Psoas muscle (tissue), 8 donors: ENCODE measurements at regions of chr9 and their contacts with region 1.

Region 1: GRCh38 chr9:35664531-35665470 is at the start of gene ARHGEF39:
- DNase-seq: peak; percentile 85 to 89
- ATAC-seq: peak; percentile 82 to 88 (median 86)
- H3K4me3 ChIP-seq: peak within 1 kb of the TSS; percentile 67
- H3K27ac ChIP-seq: peak within 1 kb of the TSS; percentile 61
- H3K4me1 ChIP-seq: peaks cover 24% of the 10 kb centered on the region
- H3K27me3 ChIP-seq: no peaks in the 10 kb centered on the region
- CTCF ChIP-seq: no peak
- total RNA-seq, gene ARHGEF39: 0.07 to 0.21 (median 0.10) TPM in 3 of 4 donors, not detected in the other

Region 2: GRCh38 chr9:35685506-35685905 is 20.7 kb after region 1 on chr9:
- intact Hi-C with region 1: loop called in 1 of 2 experiments (anchors 2 kb)
- DNase-seq: no peak
- ATAC-seq: no peak
- H3K4me3 ChIP-seq: peak overlapping the region; percentile 100
- H3K27ac ChIP-seq: peak overlapping the region; percentile 100
- H3K4me1 ChIP-seq: peaks cover 27% of the 10 kb centered on the region
- H3K27me3 ChIP-seq: no peaks in the 10 kb centered on the region
- CTCF ChIP-seq: no peak

Region 3: DNA sequence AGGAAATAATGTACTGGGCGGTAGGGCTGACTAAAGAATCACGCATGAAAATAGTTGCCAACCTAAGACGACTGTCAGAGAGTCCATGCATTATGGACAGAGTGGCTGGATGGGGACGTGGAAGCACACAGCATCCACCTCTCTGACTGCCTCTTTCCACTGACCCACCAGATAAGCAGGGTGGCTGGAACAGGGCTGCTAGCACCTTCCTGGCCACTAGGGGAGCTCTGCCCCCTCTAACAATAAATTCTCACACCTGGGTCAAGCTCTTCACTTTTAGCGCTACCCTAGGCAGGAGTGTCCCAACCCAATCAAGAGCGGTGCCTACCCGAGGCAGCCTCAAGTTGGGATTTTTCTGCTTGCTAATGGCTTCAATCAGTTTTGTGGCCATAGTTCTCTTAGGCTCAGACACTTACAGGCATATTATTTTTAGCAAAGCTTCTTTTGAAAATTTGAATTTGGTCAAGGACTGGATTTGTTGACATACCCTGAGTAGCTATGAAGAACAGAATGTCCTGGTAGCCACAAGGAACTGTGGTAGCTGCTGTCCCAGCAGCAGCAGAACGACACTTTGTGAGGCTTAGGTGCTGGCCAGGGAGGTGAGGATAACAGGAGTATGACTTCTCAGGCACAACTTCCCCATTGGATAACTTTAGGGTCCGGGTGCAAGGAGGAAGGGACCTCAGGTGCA is 31.9 kb after region 1 on chr9:
- intact Hi-C with region 1: loop called (anchors 5 kb)
- DNase-seq: peak; percentile 46 to 74
- ATAC-seq: peak; percentile 71 to 85 (median 76)
- H3K4me3 ChIP-seq: no peak overlapping the region
- H3K27ac ChIP-seq: peak overlapping the region; percentile 46
- H3K4me1 ChIP-seq: peaks cover 13% of the 10 kb centered on the region
- H3K27me3 ChIP-seq: no peaks in the 10 kb centered on the region
- CTCF ChIP-seq: peak; percentile 82